ENCODE measurements at regions of chr17 and their contacts with region 1.

Region 1: DNA sequence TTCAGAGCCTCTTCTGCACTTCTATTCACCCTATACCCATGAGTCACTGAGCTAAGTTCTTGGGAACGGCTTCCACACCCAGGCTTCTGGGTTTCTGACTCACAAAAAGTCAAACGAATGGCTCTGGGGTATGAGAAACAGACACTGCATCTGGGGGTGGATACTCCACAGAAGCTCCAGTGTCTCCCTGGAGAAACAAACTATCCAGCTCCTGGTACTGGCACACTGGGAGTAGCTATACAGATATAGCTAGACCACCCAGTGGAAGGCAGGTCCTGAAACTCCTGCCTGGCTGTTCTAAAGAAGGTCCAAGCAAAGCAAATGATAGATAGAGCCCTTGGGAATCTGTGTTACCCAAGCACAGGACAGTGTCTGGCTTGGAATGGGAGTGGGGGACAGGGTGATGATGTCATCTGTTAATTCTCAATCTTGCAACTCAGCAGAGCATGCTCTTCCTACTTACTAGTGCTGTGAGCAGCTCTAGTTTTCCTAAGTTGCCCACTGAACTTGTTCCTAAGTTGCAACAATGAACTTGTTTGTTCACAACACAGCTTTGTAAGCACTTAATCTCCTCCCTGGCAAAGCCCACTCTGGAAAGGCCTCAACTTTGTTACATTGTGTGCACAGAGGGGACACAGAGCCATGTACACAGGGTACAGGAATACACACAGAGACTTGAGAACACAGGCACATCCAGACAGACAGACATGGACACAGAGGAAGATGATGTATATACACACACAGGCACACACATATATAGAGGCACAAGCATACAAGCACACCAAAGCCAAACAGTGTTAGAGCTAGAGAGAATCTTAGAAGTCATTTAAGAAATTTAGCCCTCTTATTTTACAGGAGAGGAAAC is 6.7 kb downstream of the MMP28 start:
- DNase-seq: peak; percentile 44
- H3K4me3 ChIP-seq: no peak overlapping the region
- H3K27ac ChIP-seq: peak overlapping the region; percentile 63 to 79
- H3K4me1 ChIP-seq: peaks cover 0 to 48% of the 10 kb centered on the region in 2 experiments; a peak in 3 of 4 replicates
- H3K27me3 ChIP-seq: peaks cover 16% of the 10 kb centered on the region
- CTCF ChIP-seq: no peak
- EP300 ChIP-seq: no peak
- RAD21 ChIP-seq: no peak

Region 2: DNA sequence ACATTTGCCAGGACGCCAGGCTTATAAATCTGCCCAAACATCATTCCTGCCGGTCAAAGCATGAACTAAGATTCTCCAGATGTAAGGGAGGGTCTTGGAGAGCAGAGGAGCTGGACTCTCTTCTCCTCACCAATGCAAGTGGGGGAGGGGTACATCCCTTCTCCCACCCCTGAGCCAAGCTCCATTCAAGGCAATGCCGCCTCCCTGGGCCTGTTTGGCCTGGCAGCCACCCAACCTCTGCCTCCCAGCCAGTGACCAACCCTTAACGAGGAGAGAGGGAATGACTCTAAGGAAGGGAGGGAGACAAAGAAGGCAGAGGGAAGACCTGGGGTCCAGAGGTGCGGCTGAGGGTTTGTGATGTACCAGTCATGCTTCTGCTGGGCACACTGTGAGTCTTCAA is 14.2 kb before region 1 on chr17:
- CTCF ChIA-PET with region 1: interaction called, 13 read pairs
- POLR2A ChIA-PET with region 1: interaction called, 5 read pairs
- DNase-seq: peak; percentile 85
- H3K4me3 ChIP-seq: no peak overlapping the region
- H3K27ac ChIP-seq: peak overlapping the region in 1 of 2 experiments; percentile 80; a peak in 2 of 4 replicates
- H3K4me1 ChIP-seq: peaks cover 0 to 26% of the 10 kb centered on the region in 2 experiments; a peak in 1 of 4 replicates
- H3K27me3 ChIP-seq: no peaks in the 10 kb centered on the region
- CTCF ChIP-seq: no peak
- EP300 ChIP-seq: no peak
- RAD21 ChIP-seq: no peak